ENCODE measurements at regions of chr6 and their contacts with region 1.

Region 1: GRCh38 chr6:150632785-150633485 is 33.2 kb downstream of the PLEKHG1 start:
- DNase-seq: peak; percentile 41
- ATAC-seq: peak; percentile 50
- H3K4me3 ChIP-seq: peak overlapping the region; percentile 71
- H3K27ac ChIP-seq: peak overlapping the region; percentile 69
- H3K4me1 ChIP-seq: peaks cover 24% of the 10 kb centered on the region
- H3K27me3 ChIP-seq: no peaks in the 10 kb centered on the region; a peak in 1 of 4 replicates
- CTCF ChIP-seq: no peak
- EP300 ChIP-seq: peak in 1 of 2 experiments; percentile 68; a peak in 1 of 4 replicates
- POLR2A ChIP-seq: peak; percentile 45; the same call in 1 of the 2 replicates
- RAD21 ChIP-seq: no peak

Region 2: DNA sequence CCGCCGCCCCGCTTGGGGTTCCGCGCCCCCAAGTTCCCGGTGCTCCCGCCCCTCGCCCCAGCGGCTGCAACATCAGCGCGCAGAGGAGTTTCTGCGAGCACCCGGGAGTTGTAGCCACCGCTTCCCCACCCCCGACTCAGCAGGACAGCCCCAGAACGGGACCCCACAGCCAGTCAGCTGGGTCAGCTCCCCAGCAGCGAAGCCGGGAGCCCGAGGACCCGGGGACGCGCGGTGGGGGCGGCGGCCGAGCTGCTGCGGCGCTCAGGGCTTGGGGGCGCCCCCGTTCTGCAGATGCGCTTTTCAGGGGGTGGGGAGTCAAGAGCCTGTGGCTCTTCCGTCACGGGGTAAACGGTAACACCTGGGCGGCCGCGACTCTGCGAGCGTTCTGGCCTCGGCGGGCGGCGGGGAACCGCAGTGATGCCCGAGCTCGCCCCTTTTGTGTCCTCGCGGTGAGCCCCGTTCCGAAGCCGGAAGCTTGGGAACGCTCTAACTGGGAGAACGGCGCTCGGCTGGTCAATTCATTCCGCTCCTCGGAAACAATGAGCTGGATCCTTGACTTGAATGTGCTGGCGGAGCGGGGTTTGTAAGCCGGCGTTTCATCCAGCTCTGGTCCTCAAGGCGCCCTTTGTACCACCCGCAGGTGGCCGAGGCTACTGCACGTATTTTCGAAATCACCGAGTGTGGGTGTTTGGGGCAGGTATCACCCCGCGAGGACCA is 32.5 kb before region 1 on chr6:
- CTCF ChIA-PET with region 1: interaction called, 15 read pairs
- POLR2A ChIA-PET with region 1: interaction called, 19 read pairs
- RAD21 ChIA-PET with region 1: interaction called, 73 read pairs
- SMC1A ChIA-PET with region 1: interaction called, 30 read pairs
- in situ Hi-C with region 1: no loop called
- intact Hi-C with region 1: loop called (anchors 1 kb)
- DNase-seq: no peak
- ATAC-seq: peak; percentile 84
- H3K4me3 ChIP-seq: peak overlapping the region; percentile 75
- H3K27ac ChIP-seq: no peak overlapping the region
- H3K4me1 ChIP-seq: peaks cover 4% of the 10 kb centered on the region; the same call in 1 of the 2 replicates
- H3K27me3 ChIP-seq: peaks cover 2 to 7% of the 10 kb centered on the region in 2 experiments
- CTCF ChIP-seq: peak; percentile 23 to 54 (median 54)
- EP300 ChIP-seq: no peak
- POLR2A ChIP-seq: peak; percentile 43; the same call in 1 of the 2 replicates
- RAD21 ChIP-seq: peak; percentile 45

Region 3: GRCh38 chr6:150617496-150618460 is 15.2 kb before region 1 on chr6:
- CTCF ChIA-PET with region 1: interaction called, 4 read pairs
- POLR2A ChIA-PET with region 1: interaction called, 16 read pairs
- RAD21 ChIA-PET with region 1: interaction called, 11 read pairs
- SMC1A ChIA-PET with region 1: interaction called, 23 read pairs
- in situ Hi-C with region 1: no loop called
- intact Hi-C with region 1: no loop called
- DNase-seq: no peak
- ATAC-seq: peak; percentile 44
- H3K4me3 ChIP-seq: no peak overlapping the region
- H3K27ac ChIP-seq: no peak overlapping the region
- H3K4me1 ChIP-seq: peaks cover 6% of the 10 kb centered on the region
- H3K27me3 ChIP-seq: no peaks in the 10 kb centered on the region
- CTCF ChIP-seq: no peak
- EP300 ChIP-seq: no peak
- POLR2A ChIP-seq: no peak
- RAD21 ChIP-seq: no peak

Region 4: DNA sequence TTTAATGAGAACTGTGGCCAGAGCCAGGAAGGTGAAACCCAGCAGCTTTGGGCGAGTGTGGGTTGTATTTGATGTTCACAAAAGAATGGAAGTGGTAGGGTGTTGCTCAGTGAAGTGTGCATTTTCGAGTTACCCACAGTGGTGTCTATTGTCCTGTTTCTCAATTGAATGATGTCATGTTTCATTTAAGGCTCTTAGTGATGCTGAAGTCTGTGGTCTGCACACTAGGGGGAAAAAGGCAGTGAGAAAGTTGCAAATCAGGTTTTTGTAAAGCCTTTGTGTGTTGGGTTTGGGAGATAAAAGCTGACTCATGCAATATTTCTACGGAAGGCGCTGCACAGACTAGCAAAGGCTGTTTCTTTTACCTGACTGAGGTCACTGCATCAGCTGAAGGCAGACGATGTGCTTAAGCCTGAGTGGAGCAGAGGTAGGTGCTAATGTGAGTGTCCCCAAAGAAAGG is 87.9 kb after region 1 on chr6:
- CTCF ChIA-PET with region 1: interaction called, 5 read pairs
- POLR2A ChIA-PET with region 1: interaction called, 8 read pairs
- RAD21 ChIA-PET with region 1: interaction called, 5 read pairs
- SMC1A ChIA-PET with region 1: interaction called, 12 read pairs
- in situ Hi-C with region 1: no loop called
- intact Hi-C with region 1: loop called (anchors 1 kb)
- DNase-seq: peak; percentile 94
- ATAC-seq: peak; percentile 96
- H3K4me3 ChIP-seq: 0 out of 2 replicates have a peak overlapping the region, but pooled peaks have one; percentile 7
- H3K27ac ChIP-seq: peak overlapping the region; percentile 32
- H3K4me1 ChIP-seq: peaks cover 19% of the 10 kb centered on the region
- H3K27me3 ChIP-seq: no peaks in the 10 kb centered on the region
- CTCF ChIP-seq: peak in 1 of 3 experiments; percentile 16; a peak in 1 of 6 replicates
- EP300 ChIP-seq: peak; percentile 77 to 98
- POLR2A ChIP-seq: no peak
- RAD21 ChIP-seq: peak; percentile 40

Measured in GM12878 (cell line).